Activated CD4-positive, alpha-beta T cell treated with anti-CD3 and anti-CD28 coated beads for 36 hours (primary cell): ENCODE measurements at regions of chr12 and their contacts with region 1.

Region 1: DNA sequence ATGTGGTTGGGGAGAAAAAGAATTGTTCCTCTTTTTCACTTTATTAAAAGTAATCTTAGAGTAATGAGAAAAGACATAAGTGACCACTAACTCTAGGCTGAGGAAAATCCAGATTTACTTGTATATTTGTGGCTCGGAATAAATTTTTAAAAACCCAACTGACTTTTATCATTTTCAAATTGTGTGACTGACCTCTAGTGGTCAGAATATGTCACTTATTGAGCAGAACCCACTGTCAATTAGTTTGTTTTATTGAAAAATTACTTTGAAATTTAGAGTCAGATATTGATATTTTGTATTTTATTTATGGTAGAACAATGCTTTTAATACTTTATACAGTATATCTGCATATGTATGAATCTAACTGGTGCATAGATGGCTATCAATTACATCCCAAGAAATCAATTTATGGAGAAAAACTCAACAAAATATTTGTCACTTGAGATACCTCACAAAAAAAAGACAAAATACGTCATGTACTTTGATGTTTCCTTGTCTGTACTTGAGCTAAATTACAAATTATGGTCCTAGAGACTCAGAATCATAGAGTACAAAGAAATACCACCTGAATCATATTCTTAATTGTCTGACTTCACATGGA is 229.4 kb downstream of the CNTN1 start:
- DNase-seq: no peak
- ATAC-seq: no peak
- H3K4me3 Mint-ChIP-seq: no peak overlapping the region
- H3K27ac Mint-ChIP-seq: no peak overlapping the region
- H3K4me1 Mint-ChIP-seq: no peaks in the 10 kb centered on the region
- H3K27me3 Mint-ChIP-seq: peaks cover 3% of the 10 kb centered on the region

Region 2: GRCh38 chr12:40152783-40153383 is 768.8 kb before region 1 on chr12:
- CTCF ChIA-PET with region 1: no interaction called
- POLR2A ChIA-PET with region 1: no interaction called
- intact Hi-C with region 1: loop called in 1 of 2 experiments (anchors 2 kb)
- DNase-seq: peak; percentile 67
- ATAC-seq: no peak
- H3K4me3 Mint-ChIP-seq: no peak overlapping the region
- H3K27ac Mint-ChIP-seq: no peak overlapping the region
- H3K4me1 Mint-ChIP-seq: no peaks in the 10 kb centered on the region
- H3K27me3 Mint-ChIP-seq: peaks cover 19% of the 10 kb centered on the region

Region 3: DNA sequence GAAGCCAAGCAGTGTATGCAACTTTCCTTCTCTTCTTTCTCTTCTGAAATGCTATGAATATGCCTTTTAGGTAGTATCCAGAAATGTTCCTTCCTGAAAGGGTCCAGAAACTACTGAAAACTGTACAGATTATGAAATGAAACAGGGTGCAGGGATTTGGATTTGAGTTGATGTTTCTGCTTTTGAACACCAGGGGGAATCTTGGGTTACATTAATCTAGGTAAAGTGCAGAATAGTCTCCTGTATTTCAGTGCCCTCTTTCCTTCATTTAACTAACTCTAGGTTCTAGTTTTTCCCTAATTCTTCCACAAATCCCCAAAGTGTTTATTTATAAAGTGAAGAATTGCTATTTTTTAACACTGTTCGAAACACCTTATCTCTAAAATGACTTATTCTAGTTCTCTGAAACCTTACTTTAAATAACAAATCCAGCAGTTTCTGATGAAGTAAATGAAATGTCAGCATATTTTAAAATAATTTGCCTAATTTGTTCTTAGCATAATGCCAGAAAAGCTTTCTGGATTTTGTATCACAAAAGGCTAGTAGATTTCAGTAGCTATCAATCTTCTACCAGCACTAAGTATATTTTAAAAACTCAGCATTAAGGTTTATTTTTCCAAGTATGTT is 585.0 kb before region 1 on chr12:
- CTCF ChIA-PET with region 1: no interaction called
- POLR2A ChIA-PET with region 1: no interaction called
- intact Hi-C with region 1: loop called in 1 of 2 experiments (anchors 2 kb)
- DNase-seq: no peak
- ATAC-seq: no peak
- H3K4me3 Mint-ChIP-seq: no peak overlapping the region
- H3K27ac Mint-ChIP-seq: no peak overlapping the region
- H3K4me1 Mint-ChIP-seq: no peaks in the 10 kb centered on the region
- H3K27me3 Mint-ChIP-seq: no peaks in the 10 kb centered on the region

Region 4: DNA sequence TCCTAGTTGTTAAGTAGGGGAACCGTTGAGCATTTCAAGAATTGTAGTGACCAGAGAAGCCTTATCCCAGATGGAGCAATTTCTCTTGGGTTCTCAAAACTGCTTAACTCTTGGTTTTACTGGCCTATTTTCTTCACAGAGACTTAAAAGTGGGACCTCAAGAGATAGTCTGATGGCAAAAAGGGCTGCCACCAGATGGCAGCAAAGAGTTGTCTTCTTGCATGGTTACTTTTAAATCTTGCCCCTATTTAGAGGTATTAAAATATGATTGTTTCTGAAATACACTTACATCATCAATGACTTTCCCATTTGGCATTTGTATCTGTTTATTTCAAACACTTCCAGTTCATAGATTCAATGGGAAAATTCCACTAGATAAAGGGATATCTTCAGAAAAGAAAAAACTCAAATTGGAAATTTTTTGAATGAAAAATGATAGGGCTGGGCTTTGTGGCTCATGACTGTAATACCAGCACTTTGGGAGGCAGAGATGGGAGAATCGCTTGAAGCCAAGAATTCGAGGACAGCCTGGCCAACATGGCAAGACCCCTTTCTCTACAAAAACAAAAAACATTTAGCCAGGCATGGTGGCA is 299.3 kb before region 1 on chr12:
- CTCF ChIA-PET with region 1: interaction called, 5 read pairs
- POLR2A ChIA-PET with region 1: no interaction called
- intact Hi-C with region 1: loop called (anchors 1 to 2 kb)
- DNase-seq: peak; percentile 62
- ATAC-seq: no peak
- H3K4me3 Mint-ChIP-seq: no peak overlapping the region
- H3K27ac Mint-ChIP-seq: no peak overlapping the region
- H3K4me1 Mint-ChIP-seq: no peaks in the 10 kb centered on the region
- H3K27me3 Mint-ChIP-seq: peaks cover 3% of the 10 kb centered on the region

Region 5: GRCh38 chr12:40971911-40972310 is 50.2 kb after region 1 on chr12:
- CTCF ChIA-PET with region 1: no interaction called
- POLR2A ChIA-PET with region 1: no interaction called
- intact Hi-C with region 1: no loop called
- DNase-seq: no peak
- ATAC-seq: no peak
- H3K4me3 Mint-ChIP-seq: no peak overlapping the region
- H3K27ac Mint-ChIP-seq: no peak overlapping the region
- H3K4me1 Mint-ChIP-seq: no peaks in the 10 kb centered on the region
- H3K27me3 Mint-ChIP-seq: no peaks in the 10 kb centered on the region

Region 6: GRCh38 chr12:41344776-41345470 is 423.3 kb after region 1 on chr12:
- CTCF ChIA-PET with region 1: no interaction called
- POLR2A ChIA-PET with region 1: no interaction called
- intact Hi-C with region 1: no loop called
- DNase-seq: no peak
- ATAC-seq: no peak
- H3K4me3 Mint-ChIP-seq: no peak overlapping the region
- H3K27ac Mint-ChIP-seq: no peak overlapping the region
- H3K4me1 Mint-ChIP-seq: no peaks in the 10 kb centered on the region
- H3K27me3 Mint-ChIP-seq: peaks cover 2% of the 10 kb centered on the region

Region 7: GRCh38 chr12:41437563-41437962 is 515.9 kb after region 1 on chr12:
- CTCF ChIA-PET with region 1: no interaction called
- POLR2A ChIA-PET with region 1: no interaction called
- intact Hi-C with region 1: no loop called
- DNase-seq: no peak
- ATAC-seq: no peak
- H3K4me3 Mint-ChIP-seq: no peak overlapping the region
- H3K27ac Mint-ChIP-seq: no peak overlapping the region
- H3K4me1 Mint-ChIP-seq: no peaks in the 10 kb centered on the region
- H3K27me3 Mint-ChIP-seq: no peaks in the 10 kb centered on the region